A673 (cell line): ENCODE measurements at regions of chr12 and their contacts with region 1.

Region 1: GRCh38 chr12:53213348-53213747 is 6.3 kb upstream of the ITGB7 start:
- DNase-seq: peak; percentile 86
- H3K4me3 ChIP-seq: no peak overlapping the region
- H3K27ac ChIP-seq: no peak overlapping the region
- H3K4me1 ChIP-seq: peaks cover 19% of the 10 kb centered on the region
- H3K27me3 ChIP-seq: no peaks in the 10 kb centered on the region
- CTCF ChIP-seq: peak; percentile 98

Region 2: DNA sequence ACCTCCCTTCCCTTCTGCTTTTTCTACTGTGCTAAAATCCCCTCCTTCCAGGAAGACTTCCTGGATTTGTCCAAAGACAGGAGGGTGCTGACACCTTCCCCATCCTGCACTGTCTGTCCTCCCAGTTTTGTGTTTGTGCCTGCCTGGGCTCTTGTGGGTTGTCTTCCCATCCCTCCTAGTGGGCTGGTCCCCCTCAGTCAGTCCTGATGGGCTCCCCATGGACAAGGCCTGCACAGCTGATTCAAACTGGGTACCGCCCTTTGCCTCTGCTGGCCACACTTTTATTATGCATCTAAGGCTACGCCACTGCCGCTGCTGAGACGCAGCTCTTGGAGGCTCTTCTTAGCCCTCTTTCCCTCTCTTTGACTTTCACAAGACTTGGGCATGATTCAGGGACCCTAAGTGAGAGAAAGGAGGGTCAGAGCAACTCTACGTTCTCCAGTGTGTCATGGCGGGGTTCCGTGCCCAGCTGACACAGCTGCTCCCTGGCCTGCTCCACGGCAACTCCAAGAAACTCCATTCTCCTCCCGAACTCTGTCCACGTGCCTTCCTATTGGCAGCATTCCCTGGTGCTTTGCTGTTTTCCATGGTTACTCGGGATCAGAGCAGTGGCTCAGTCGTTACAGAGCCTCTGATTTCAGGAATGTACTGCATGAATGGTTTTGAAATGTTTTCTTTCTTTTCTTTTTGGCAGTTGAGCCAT is 842.3 kb before region 1 on chr12:
- CTCF ChIA-PET with region 1: no interaction called
- POLR2A ChIA-PET with region 1: no interaction called
- intact Hi-C with region 1: no loop called
- DNase-seq: no peak
- H3K4me3 ChIP-seq: no peak overlapping the region
- H3K27ac ChIP-seq: no peak overlapping the region
- H3K4me1 ChIP-seq: no peaks in the 10 kb centered on the region
- H3K27me3 ChIP-seq: no peaks in the 10 kb centered on the region
- CTCF ChIP-seq: no peak

Region 3: DNA sequence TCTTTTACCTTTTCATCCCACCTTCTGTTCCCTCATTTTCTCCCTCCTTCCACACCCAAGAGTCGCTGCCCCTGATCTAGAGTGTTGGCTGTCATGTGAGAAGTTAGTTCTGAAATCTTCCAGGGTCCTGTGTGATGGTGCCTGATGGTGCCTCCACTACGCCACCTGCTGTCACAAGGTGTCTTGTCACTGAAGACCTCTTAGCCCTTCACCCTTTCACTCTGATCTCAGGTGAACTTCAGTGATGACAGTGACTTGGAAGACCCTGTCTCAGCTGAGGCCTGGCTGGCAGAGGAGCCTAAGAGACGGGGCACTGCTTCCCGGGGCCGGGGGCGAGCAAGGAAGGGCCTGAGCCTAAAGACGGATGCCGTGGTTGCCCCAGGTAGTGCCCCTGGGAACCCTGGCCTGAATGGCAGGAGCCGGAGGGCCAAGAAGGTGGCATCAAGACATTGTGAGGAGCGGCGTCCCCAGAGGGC is 74.4 kb after region 1 on chr12:
- CTCF ChIA-PET with region 1: interaction called, 13 read pairs
- POLR2A ChIA-PET with region 1: no interaction called
- intact Hi-C with region 1: loop called (anchors 1 kb)
- DNase-seq: peak; percentile 67
- H3K4me3 ChIP-seq: no peak overlapping the region
- H3K27ac ChIP-seq: no peak overlapping the region
- H3K4me1 ChIP-seq: no peaks in the 10 kb centered on the region
- H3K27me3 ChIP-seq: no peaks in the 10 kb centered on the region
- CTCF ChIP-seq: peak; percentile 72

Region 4: DNA sequence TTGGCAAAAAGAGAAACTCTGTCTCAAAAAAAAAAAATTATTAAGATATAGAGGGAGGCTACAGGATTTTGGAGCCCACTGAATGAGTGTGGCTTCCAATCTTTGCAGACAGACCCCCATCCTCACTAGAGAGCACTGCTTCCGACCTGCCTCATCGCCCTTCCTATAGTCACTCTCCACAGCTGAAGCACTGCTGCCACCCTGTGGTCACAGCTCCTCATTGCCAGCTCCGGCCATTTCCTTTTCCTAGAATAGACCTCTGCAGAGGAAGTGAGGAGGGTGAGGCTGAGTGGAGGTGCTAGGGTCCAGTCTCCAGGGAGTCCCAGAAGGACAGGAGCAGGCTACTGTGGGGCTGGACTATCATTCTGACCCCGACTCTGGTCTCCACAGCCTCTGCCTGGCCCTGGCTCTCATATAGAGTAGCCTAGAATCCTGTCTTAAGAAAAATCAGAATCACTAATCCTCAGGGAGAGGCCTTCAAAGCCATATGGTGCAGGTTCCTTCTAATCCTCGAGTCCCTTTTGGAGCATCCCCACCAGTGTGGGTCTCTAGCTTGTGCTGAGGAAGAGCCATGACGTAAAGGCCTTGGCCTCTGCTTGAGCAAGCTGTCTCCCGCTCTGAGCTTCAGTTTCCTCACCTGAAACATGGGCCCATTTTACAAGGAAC is 295.3 kb after region 1 on chr12:
- CTCF ChIA-PET with region 1: interaction called, 3 read pairs
- POLR2A ChIA-PET with region 1: no interaction called
- intact Hi-C with region 1: loop called (anchors 2 kb)
- DNase-seq: peak; percentile 89
- H3K4me3 ChIP-seq: no peak overlapping the region
- H3K27ac ChIP-seq: no peak overlapping the region
- H3K4me1 ChIP-seq: peaks cover 3% of the 10 kb centered on the region
- H3K27me3 ChIP-seq: no peaks in the 10 kb centered on the region
- CTCF ChIP-seq: peak; percentile 96